ENCODE measurements at regions of chr2 and their contacts with region 1.

Region 1: DNA sequence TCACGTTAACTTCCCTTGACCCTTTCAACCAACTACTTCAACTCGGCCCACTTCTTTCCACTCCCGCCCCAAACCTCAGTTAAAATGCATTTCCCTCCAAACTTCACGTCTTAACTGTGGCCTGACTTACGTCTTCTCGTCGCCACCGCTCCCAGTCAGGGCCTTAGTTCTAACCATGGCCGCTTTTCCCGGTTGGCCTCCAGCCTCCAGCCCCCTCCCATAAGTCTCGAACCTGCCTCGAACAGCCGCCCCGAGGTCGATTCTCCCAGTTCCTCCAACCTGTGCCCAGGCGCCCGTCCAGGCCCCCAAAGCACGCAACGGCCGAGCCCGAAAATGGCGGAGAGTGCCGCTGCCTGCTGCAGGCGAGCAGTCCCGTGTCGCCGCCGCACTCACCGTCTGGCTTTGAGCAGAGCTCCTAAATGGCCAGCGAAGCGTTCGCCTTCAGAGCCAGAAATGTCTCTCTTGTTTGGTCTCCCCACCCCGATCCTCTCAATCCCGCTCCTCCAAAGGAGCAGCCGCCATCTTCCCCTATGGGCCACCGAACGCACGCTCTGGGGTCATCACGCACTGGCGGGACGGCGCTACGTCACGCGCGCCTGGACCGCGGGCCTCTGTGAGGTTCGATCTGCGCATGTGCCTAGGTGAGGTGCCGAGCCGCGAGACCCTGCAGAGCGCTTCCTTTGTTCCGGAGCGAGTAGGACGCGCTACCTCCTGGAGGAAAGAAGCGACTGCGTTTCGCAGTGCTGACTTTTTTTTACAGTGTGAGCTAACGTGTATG is at the start of gene WDR33:
- DNase-seq: peak; percentile 87 to 98 (median 95)
- ATAC-seq: peak; percentile 95
- H3K4me3 ChIP-seq: peak within 1 kb of the TSS; percentile 88 to 92
- H3K4me3 Mint-ChIP-seq: peak within 1 kb of the TSS; percentile 92
- H3K27ac ChIP-seq: peak within 1 kb of the TSS; percentile 95 to 98
- H3K27ac Mint-ChIP-seq: peak within 1 kb of the TSS; percentile 98
- H3K4me1 ChIP-seq: peaks cover 42% of the 10 kb centered on the region
- H3K4me1 Mint-ChIP-seq: peaks cover 51% of the 10 kb centered on the region
- H3K27me3 ChIP-seq: no peaks in the 10 kb centered on the region
- H3K27me3 Mint-ChIP-seq: no peaks in the 10 kb centered on the region
- CTCF ChIP-seq: no peak
- total RNA-seq, gene WDR33: 60.3 to 61.0 TPM

Region 2: DNA sequence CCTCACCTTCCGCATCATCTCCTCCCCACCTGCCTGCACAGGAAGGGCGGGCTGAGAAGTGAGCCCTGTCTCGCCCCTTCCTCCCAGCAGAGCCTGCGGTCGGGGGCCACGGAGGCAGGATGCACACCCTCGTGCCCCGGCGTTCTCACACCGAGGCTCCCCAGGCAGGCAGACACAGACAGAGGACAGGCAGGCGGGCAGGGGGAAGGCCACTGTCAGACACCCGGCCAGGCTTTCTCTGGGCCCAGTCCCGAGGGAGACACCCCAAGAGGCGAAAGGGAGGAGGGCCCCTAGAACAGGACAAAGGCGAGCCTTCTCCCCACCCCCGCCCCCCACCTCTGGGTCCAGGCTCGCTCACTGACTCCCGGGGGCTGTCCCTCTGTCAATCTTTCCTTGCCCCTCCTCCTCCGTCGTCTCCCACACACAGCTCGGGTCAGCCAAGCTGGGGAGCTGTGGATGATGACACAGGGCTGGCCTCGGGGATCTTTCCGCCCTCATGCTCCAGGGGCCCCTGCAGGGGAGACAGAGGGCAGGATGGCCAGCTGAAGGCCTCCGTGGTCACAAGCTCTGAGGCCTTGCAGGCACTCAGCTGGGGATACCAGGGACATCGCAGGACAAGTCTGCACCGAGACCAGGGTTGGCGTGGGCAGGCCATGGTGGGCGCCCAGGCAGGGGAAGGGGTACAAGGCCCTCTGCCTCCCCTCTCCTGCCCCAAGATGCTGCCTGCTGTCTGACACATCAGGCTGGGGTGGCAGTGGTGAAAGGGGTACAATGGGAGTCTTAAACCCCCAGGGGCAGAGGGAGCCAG is 728.8 kb before region 1 on chr2:
- CTCF ChIA-PET with region 1: no interaction called
- POLR2A ChIA-PET with region 1: no interaction called
- intact Hi-C with region 1: loop called in 1 of 2 experiments (anchors 2 kb)
- DNase-seq: peak; percentile 67 to 94 (median 82)
- ATAC-seq: peak; percentile 66
- H3K4me3 ChIP-seq: peak overlapping the region; percentile 84 to 94
- H3K4me3 Mint-ChIP-seq: peak overlapping the region; percentile 90
- H3K27ac ChIP-seq: peak overlapping the region; percentile 94 to 96
- H3K27ac Mint-ChIP-seq: peak overlapping the region; percentile 99
- H3K4me1 ChIP-seq: peaks cover 94% of the 10 kb centered on the region
- H3K4me1 Mint-ChIP-seq: peaks cover 85% of the 10 kb centered on the region
- H3K27me3 ChIP-seq: no peaks in the 10 kb centered on the region
- H3K27me3 Mint-ChIP-seq: no peaks in the 10 kb centered on the region
- CTCF ChIP-seq: no peak

Region 3: GRCh38 chr2:127771756-127772155 is 39.1 kb before region 1 on chr2:
- CTCF ChIA-PET with region 1: no interaction called
- POLR2A ChIA-PET with region 1: interaction called, 3 read pairs
- intact Hi-C with region 1: loop called in 1 of 2 experiments (anchors 5 kb)
- DNase-seq: no peak
- ATAC-seq: no peak
- H3K4me3 ChIP-seq: no peak overlapping the region
- H3K4me3 Mint-ChIP-seq: no peak overlapping the region
- H3K27ac ChIP-seq: no peak overlapping the region
- H3K27ac Mint-ChIP-seq: no peak overlapping the region
- H3K4me1 ChIP-seq: peaks cover 3% of the 10 kb centered on the region
- H3K4me1 Mint-ChIP-seq: peaks cover 37% of the 10 kb centered on the region
- H3K27me3 ChIP-seq: no peaks in the 10 kb centered on the region
- H3K27me3 Mint-ChIP-seq: no peaks in the 10 kb centered on the region
- CTCF ChIP-seq: no peak

Region 4: DNA sequence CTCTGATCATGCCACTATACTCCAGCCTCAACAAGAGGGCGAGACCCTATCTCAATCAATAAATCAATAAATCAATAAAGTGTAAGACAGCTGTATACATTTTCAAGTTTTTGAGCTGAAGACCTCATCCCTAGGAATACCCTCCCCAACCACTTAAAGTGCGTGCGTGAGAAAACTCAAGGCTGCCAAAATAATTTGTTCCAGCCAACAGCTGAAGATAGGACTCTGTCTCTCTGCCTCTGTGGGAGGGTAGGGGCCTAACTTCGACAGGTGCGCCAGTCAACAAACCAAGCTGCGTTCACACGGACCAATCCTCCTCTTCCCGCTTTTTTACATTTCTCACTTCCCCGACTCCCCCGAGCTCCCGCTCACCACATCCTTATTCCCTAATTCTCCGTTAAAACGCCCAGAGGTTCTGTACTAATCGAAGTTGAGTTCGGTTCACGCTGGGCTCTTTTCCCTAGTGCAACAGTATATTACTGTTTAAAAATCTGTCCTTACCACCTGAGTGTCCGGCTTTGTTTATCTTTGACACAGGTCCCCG is 46.5 kb after region 1 on chr2:
- CTCF ChIA-PET with region 1: no interaction called
- POLR2A ChIA-PET with region 1: interaction called, 3 read pairs
- intact Hi-C with region 1: loop called (anchors 1 kb)
- DNase-seq: peak in 3 of 9 experiments; percentile 11 to 44 (median 22)
- ATAC-seq: no peak
- H3K4me3 ChIP-seq: peak overlapping the region; percentile 83 to 94
- H3K4me3 Mint-ChIP-seq: peak overlapping the region; percentile 90
- H3K27ac ChIP-seq: peak overlapping the region; percentile 76 to 82
- H3K27ac Mint-ChIP-seq: peak overlapping the region; percentile 85
- H3K4me1 ChIP-seq: peaks cover 28% of the 10 kb centered on the region
- H3K4me1 Mint-ChIP-seq: peaks cover 51% of the 10 kb centered on the region
- H3K27me3 ChIP-seq: no peaks in the 10 kb centered on the region
- H3K27me3 Mint-ChIP-seq: no peaks in the 10 kb centered on the region
- CTCF ChIP-seq: no peak

Region 5: GRCh38 chr2:128090945-128091725 is 280.3 kb after region 1 on chr2 and contains the start of gene UGGT1:
- CTCF ChIA-PET with region 1: no interaction called
- POLR2A ChIA-PET with region 1: interaction called, 3 read pairs
- intact Hi-C with region 1: loop called (anchors 2 to 5 kb)
- DNase-seq: peak; percentile 87 to 98 (median 94)
- ATAC-seq: peak; percentile 97
- H3K4me3 ChIP-seq: peak within 1 kb of the TSS; percentile 86 to 94
- H3K4me3 Mint-ChIP-seq: peak within 1 kb of the TSS; percentile 90
- H3K27ac ChIP-seq: peak within 1 kb of the TSS; percentile 60 to 89
- H3K27ac Mint-ChIP-seq: peak within 1 kb of the TSS; percentile 95
- H3K4me1 ChIP-seq: peaks cover 5% of the 10 kb centered on the region
- H3K4me1 Mint-ChIP-seq: peaks cover 49% of the 10 kb centered on the region
- H3K27me3 ChIP-seq: no peaks in the 10 kb centered on the region
- H3K27me3 Mint-ChIP-seq: no peaks in the 10 kb centered on the region
- CTCF ChIP-seq: no peak
- total RNA-seq, gene UGGT1: 25.6 to 25.9 TPM